ENCODE measurements at regions of chr19 and their contacts with region 1.

Region 1: GRCh38 chr19:19385108-19385899 is 20.2 kb upstream of the GATAD2A start:
- DNase-seq: peak; percentile 97 to 100 (median 99)
- ATAC-seq: peak; percentile 90
- H3K4me3 Mint-ChIP-seq: peak overlapping the region; percentile 85 to 100 (median 92)
- H3K27ac Mint-ChIP-seq: peak overlapping the region; percentile 86 to 96 (median 94)
- H3K4me1 Mint-ChIP-seq: peaks cover 27 to 47% (median 44%) of the 10 kb centered on the region in 4 donors
- H3K27me3 Mint-ChIP-seq: no peaks in the 10 kb centered on the region

Region 2: DNA sequence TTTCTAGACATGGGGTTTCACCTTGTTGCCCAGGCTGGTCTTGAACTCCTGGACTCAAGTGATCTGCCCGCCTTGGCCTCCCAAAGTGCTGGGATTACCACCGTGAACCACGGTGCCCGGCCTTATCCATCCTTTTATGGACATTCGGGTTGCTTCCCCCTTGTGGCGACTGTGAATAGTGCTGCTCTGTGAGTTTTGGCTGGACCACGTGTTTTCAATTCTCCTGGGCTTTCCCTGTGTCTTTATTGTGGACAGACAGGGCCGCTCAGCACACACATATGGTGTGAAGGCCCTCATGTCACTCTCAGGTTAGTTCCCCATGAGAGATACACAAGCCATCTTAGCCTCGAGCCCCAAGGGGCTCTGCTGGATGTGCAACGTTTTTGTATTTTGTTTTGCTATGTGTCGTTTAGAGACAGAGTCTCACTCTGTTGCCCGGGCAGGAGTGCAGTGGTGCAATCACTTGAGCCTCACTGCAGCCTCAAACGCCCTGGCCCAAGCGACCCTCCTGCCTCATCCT is 24.2 kb before region 1 on chr19:
- POLR2A ChIA-PET with region 1: interaction called, 13 read pairs
- DNase-seq: peak; percentile 37 to 78 (median 64)
- ATAC-seq: peak; percentile 46 to 60
- H3K4me3 Mint-ChIP-seq: peak overlapping the region; percentile 12 to 62 (median 49)
- H3K27ac Mint-ChIP-seq: peak overlapping the region in 9 of 10 donors; percentile 28 to 86 (median 64)
- H3K4me1 Mint-ChIP-seq: peaks cover 21 to 52% (median 38%) of the 10 kb centered on the region in 4 donors
- H3K27me3 Mint-ChIP-seq: no peaks in the 10 kb centered on the region

Region 3: DNA sequence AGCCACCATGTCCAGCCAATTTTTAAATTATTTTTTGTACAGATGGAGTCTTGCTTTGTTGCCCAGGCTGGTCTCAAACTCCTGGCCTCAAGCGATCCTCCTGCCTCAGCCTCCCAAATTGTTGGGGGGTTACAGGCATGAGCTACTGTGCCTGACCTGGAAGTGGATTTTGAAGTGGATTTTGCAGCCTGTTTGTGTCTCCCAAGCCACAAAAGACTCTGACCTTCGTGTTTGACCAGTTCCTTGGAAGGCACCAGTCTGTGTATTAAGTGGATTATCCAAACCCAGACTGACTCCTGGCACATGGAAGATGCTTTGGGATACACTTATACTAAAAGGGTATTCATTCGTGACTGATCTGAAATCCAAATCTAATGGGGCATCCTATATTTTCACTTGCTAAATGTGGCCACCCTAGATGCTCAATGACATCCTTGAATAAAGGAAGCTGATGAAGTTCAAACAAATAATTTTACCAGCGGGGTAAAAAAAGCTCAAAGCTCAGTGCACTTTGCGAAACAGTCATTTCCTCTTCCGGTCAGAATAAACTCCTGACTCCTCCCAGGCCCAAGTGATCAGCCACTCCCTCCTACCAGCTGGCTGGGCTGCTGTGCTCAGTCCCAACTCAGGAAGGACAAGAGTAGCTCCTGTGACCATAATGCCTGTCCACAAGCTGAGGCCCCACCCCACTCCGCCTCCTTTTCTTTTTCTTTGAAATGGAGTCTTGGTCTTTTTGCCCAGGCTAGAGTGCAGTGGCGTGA is 12.5 kb before region 1 on chr19:
- POLR2A ChIA-PET with region 1: interaction called, 12 read pairs
- DNase-seq: peak in 3 of 10 donors; percentile 25 to 31 (median 26)
- ATAC-seq: peak; percentile 67 to 85
- H3K4me3 Mint-ChIP-seq: peak overlapping the region; percentile 12 to 74 (median 64)
- H3K27ac Mint-ChIP-seq: peak overlapping the region; percentile 25 to 94 (median 91)
- H3K4me1 Mint-ChIP-seq: peaks cover 4 to 15% (median 10%) of the 10 kb centered on the region in 4 donors
- H3K27me3 Mint-ChIP-seq: no peaks in the 10 kb centered on the region

Measured in naive thymus-derived CD8-positive, alpha-beta T cell (primary cell).